Activated naive CD4-positive, alpha-beta T cell treated with anti-CD3 and anti-CD28 coated beads for 36 hours (primary cell): ENCODE measurements at regions of chr19 and their contacts with region 1.

Region 1: DNA sequence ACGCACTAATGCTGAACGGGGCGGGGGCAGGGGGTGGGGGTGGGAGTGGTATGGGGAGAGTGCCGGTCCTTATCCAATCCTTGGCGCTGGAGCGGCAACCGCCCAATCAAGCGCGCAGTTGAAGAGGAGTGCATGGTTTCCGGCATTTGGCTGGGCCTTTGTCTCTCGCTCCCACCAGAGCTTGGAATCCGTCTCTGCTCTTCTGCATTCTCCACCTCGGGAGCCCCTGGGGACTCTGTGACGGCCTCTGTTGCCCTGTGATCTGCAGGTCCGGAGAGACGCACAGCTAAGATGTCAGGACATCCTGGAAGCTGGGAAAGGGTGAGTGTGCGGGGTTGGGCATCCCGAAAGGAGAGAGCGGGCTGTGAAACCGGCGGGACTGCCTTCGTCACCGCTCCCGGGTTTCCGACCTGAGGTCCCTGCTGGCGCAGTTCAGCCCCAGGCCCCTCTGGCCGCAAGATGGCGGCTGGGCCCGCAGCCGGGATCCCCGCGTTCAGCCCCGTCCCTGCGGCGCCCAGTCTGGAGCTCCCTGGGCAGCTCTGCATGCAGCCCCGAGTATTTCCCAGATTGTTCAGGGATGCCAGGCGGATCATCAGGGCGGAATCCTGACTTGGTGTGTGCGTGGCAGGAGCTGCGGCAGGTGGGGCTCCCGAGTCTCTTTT is 53.6 kb upstream of the ZNF254 start:
- DNase-seq: peak; percentile 90
- H3K4me3 Mint-ChIP-seq: peak overlapping the region; percentile 99
- H3K27ac Mint-ChIP-seq: peak overlapping the region; percentile 98
- H3K4me1 Mint-ChIP-seq: peaks cover 41% of the 10 kb centered on the region
- H3K27me3 Mint-ChIP-seq: no peaks in the 10 kb centered on the region

Region 2: GRCh38 chr19:22634450-22634827 is 1399.0 kb before region 1 on chr19:
- CTCF ChIA-PET with region 1: no interaction called
- intact Hi-C with region 1: loop called (anchors 2 kb)
- DNase-seq: peak; percentile 7
- H3K4me3 Mint-ChIP-seq: peak overlapping the region; percentile 94
- H3K27ac Mint-ChIP-seq: peak overlapping the region; percentile 87
- H3K4me1 Mint-ChIP-seq: peaks cover 8% of the 10 kb centered on the region
- H3K27me3 Mint-ChIP-seq: no peaks in the 10 kb centered on the region

Region 3: GRCh38 chr19:23395041-23395721 is 638.3 kb before region 1 on chr19 and contains the start of gene ZNF91:
- CTCF ChIA-PET with region 1: no interaction called
- intact Hi-C with region 1: loop called (anchors 5 kb)
- DNase-seq: peak; percentile 97
- H3K4me3 Mint-ChIP-seq: peak within 1 kb of the TSS; percentile 97
- H3K27ac Mint-ChIP-seq: peak within 1 kb of the TSS; percentile 98
- H3K4me1 Mint-ChIP-seq: peaks cover 29% of the 10 kb centered on the region
- H3K27me3 Mint-ChIP-seq: no peaks in the 10 kb centered on the region
- total RNA-seq, gene ZNF91: 33.7 to 36.3 TPM

Region 4: GRCh38 chr19:23914402-23915301 is 118.8 kb before region 1 on chr19 and contains the start of gene ZNF726:
- CTCF ChIA-PET with region 1: no interaction called
- intact Hi-C with region 1: loop called (anchors 1 kb)
- DNase-seq: peak; percentile 93
- H3K4me3 Mint-ChIP-seq: peak within 1 kb of the TSS; percentile 96
- H3K27ac Mint-ChIP-seq: peak within 1 kb of the TSS; percentile 91
- H3K4me1 Mint-ChIP-seq: peaks cover 11% of the 10 kb centered on the region
- H3K27me3 Mint-ChIP-seq: peaks cover under 1% of the 10 kb centered on the region
- total RNA-seq, gene ZNF726: 22.3 to 22.8 TPM

Region 5: DNA sequence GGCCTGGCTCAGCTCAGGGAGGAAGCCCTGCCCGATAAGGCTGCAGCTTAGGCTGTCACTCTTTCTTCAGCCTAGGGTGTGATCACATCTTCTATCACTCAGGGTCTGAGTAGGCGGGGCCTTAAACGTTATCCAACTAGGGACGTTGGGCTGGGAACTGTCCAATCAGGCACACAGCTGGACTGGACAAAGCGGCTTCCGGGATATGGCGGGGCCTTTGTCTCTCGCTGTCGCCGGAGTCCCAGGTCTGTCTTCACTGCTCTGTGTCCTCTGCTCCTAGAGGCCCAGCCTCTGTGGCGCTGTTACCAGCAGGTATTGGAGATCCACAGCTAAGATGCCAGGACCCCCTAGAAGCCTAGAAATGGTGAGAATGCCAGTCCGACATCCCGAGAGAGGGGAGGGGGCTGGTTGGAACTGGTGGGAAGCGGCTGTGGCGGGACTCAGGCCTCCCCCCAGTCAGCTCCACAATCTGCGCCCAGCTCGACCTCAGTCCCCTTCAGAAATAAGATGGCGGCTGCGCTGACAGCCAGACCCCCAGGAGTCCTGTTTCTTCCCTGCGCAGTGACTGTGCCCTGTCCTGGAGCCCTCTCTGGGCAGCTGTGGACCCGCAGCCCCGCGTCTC is 53.7 kb after region 1 on chr19 and contains the start of gene ZNF254:
- CTCF ChIA-PET with region 1: interaction called, 4 read pairs
- intact Hi-C with region 1: loop called (anchors 1 kb)
- DNase-seq: peak; percentile 92
- H3K4me3 Mint-ChIP-seq: peak within 1 kb of the TSS; percentile 88
- H3K27ac Mint-ChIP-seq: peak within 1 kb of the TSS; percentile 83
- H3K4me1 Mint-ChIP-seq: peaks cover 2% of the 10 kb centered on the region
- H3K27me3 Mint-ChIP-seq: no peaks in the 10 kb centered on the region
- total RNA-seq, gene ZNF254: 6.6 to 7.5 TPM